ENCODE measurements at regions of chr3 and their contacts with region 1.

Region 1: GRCh38 chr3:52536369-52537164 is at the start of gene UQCC5:
- DNase-seq: peak; percentile 99
- ATAC-seq: peak; percentile 82
- H3K4me3 ChIP-seq: peak within 1 kb of the TSS; percentile 90
- H3K27ac ChIP-seq: peak within 1 kb of the TSS; percentile 48
- H3K4me1 ChIP-seq: peaks cover 46% of the 10 kb centered on the region
- H3K27me3 ChIP-seq: no peaks in the 10 kb centered on the region
- CTCF ChIP-seq: no peak
- total RNA-seq, gene UQCC5: 14.5 and 26.1 TPM in 2 replicates

Region 2: GRCh38 chr3:52471371-52472238 is 65.0 kb before region 1 on chr3:
- CTCF ChIA-PET with region 1: no interaction called
- POLR2A ChIA-PET with region 1: no interaction called
- intact Hi-C with region 1: loop called (anchors 2 kb)
- DNase-seq: peak; percentile 55
- ATAC-seq: peak; percentile 85
- H3K4me3 ChIP-seq: no peak overlapping the region
- H3K27ac ChIP-seq: no peak overlapping the region
- H3K4me1 ChIP-seq: no peaks in the 10 kb centered on the region
- H3K27me3 ChIP-seq: no peaks in the 10 kb centered on the region
- CTCF ChIP-seq: peak; percentile 74